Esophagus muscularis mucosa (tissue), 4 donors: ENCODE measurements at regions of chr5 and their contacts with region 1.

Region 1: DNA sequence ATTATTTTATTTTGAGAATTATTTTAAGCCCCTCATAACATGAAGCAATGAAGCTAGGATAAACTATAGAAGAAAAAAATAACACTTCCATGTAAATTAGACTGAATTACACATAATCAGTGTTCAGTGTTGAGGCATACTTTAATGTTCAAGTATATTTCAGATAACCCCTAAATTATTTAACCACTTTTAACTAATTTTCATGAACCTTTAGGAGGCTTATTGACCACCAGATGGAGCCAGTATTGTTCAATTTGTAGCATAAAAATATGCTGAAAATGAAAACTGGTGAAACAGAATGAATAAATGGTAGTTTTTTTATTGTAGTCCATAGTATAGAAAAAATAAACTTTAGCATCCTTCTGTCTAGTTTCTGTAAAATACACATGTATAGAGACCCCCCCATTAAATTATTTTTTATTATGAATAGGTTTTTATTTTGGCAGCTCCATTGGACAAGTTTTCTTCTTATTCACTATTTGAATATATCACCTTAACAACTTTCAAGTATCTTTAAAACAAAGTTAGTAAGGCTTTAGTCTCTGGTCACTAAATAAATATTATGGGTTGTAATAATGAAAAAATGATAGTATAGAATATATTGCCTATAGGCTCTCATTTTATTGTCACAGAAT is 190.1 kb downstream of the CWC27 start:
- DNase-seq: no peak
- H3K4me3 ChIP-seq: no peak overlapping the region
- H3K27ac ChIP-seq: no peak overlapping the region
- H3K4me1 ChIP-seq: no peaks in the 10 kb centered on the region
- H3K27me3 ChIP-seq: no peaks in the 10 kb centered on the region
- CTCF ChIP-seq: peak; percentile 49 to 71 (median 59)
- EP300 ChIP-seq: no peak
- POLR2A ChIP-seq: no peak

Region 2: DNA sequence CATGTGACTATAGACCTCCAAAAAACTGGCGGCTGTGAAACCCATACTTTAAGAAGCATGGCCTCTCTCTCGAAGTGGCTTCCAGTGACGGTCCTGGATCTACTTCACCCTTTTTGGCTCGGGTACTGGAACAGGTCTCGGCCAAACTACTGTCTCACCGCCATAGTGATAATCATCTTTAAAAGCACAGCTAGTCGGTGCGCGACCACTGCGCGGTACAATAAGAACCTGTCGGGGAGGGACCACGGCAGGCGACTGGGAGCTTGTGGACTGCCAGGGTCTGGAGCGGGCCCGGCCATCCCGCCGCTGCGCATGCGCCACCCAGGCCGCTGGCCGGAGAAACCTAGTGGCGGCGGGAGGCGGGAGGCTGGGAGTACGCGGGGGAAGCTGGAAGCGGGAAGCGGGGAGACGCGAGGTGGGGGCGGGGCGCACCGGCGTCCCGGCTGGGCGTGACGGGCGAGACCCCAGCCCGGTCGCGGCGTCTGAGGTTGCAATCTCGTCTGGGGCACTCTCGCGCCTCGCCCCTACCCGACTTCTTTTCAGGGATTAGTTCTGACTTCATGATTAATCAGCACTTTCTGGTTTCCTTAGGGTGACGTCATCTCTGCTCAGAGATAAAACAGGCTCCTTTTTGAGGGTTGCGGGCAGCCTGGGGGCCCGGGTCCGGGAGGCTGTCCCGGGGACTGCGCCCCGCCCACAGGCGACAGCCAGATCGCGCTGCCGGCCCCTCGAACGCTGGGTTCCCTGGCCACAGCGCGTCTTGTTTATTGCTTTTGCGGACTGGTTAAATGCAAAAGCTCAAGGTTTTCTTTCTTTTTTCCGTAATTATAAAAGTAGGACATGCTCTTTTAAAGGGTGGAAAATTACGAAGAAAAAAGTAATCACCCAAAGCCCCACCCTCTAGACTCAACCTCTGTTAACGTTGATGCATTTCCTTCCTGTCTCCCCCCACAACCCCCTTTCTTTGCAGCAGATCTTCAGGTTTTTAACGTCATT is 76.6 kb after region 1 on chr5:
- intact Hi-C with region 1: loop called (anchors 10 kb)
- DNase-seq: peak; percentile 96
- H3K4me3 ChIP-seq: peak overlapping the region; percentile 68 to 86 (median 70)
- H3K27ac ChIP-seq: peak overlapping the region; percentile 90 to 95 (median 94)
- H3K4me1 ChIP-seq: peaks cover 25 to 35% (median 32%) of the 10 kb centered on the region in 4 donors
- H3K27me3 ChIP-seq: no peaks in the 10 kb centered on the region
- CTCF ChIP-seq: no peak
- EP300 ChIP-seq: no peak
- POLR2A ChIP-seq: peak; percentile 3